ENCODE measurements at regions of chr16 and their contacts with region 1.

Region 1: GRCh38 chr16:81444448-81445121 is at the start of gene CMIP:
- DNase-seq: peak; percentile 74
- H3K4me3 ChIP-seq: peak within 1 kb of the TSS; percentile 69 to 94 (median 72)
- H3K27ac ChIP-seq: peak within 1 kb of the TSS; percentile 93
- H3K4me1 ChIP-seq: peaks cover 26% of the 10 kb centered on the region
- H3K27me3 ChIP-seq: no peaks in the 10 kb centered on the region
- CTCF ChIP-seq: no peak
- total RNA-seq, gene CMIP: 44.5 to 98.5 TPM

Region 2: DNA sequence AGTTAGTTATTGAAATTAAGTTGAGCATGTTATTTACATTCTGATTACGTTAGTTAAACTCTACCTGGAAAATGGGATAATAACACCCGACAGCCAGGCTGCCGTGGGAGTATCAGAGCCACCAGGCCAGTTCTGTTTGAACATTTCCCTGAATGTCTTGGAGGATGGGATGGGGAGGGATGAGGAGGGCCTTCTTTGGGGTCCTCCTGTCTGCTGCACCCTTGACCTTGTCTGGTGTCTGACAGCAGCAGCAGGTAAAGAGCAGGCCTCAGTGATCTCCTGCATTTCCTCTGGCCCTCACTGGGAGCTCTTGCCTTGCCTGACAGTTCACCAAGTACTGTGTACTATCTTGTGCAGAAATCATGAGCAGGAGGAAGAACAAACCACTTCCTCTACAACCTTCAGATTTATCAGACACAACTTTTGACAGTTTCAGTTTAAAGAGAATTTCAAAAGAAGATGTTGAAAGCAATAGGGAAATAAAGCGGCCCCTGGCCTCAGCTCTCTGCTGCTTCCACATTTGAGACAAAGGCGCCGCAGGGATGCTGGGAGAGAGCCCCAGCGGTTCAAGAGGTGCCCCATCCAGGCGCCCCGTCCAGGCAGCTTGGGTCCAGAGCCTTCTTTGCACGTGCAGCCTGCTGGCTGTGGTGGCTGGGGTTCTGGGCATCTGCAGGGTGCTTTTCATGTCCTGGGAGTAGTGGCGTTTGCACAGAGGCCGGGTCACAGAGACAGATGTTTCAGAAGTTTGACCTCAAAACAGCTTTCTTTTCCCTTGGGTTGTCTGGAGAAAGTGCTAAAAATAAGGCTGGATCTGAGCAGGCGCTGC is 25.3 kb after region 1 on chr16:
- CTCF ChIA-PET with region 1: no interaction called
- dilution Hi-C with region 1: no loop called
- in situ Hi-C with region 1: no loop called
- intact Hi-C with region 1: no loop called
- DNase-seq: no peak
- H3K4me3 ChIP-seq: no peak overlapping the region
- H3K27ac ChIP-seq: no peak overlapping the region
- H3K4me1 ChIP-seq: no peaks in the 10 kb centered on the region
- H3K27me3 ChIP-seq: no peaks in the 10 kb centered on the region
- CTCF ChIP-seq: no peak

Region 3: GRCh38 chr16:81493755-81494433 is 49.3 kb after region 1 on chr16:
- CTCF ChIA-PET with region 1: no interaction called
- dilution Hi-C with region 1: no loop called
- in situ Hi-C with region 1: no loop called
- intact Hi-C with region 1: loop called (anchors 2 kb)
- DNase-seq: peak; percentile 97
- H3K4me3 ChIP-seq: no peak overlapping the region
- H3K27ac ChIP-seq: peak overlapping the region; percentile 90
- H3K4me1 ChIP-seq: peaks cover 56% of the 10 kb centered on the region
- H3K27me3 ChIP-seq: no peaks in the 10 kb centered on the region
- CTCF ChIP-seq: no peak

Region 4: GRCh38 chr16:81696961-81697615 is 252.5 kb after region 1 on chr16:
- CTCF ChIA-PET with region 1: no interaction called
- dilution Hi-C with region 1: no loop called
- in situ Hi-C with region 1: no loop called
- intact Hi-C with region 1: loop called (anchors 2 kb)
- DNase-seq: peak; percentile 48
- H3K4me3 ChIP-seq: no peak overlapping the region
- H3K27ac ChIP-seq: no peak overlapping the region
- H3K4me1 ChIP-seq: peaks cover 40% of the 10 kb centered on the region
- H3K27me3 ChIP-seq: no peaks in the 10 kb centered on the region
- CTCF ChIP-seq: peak; percentile 76 to 80

Region 5: GRCh38 chr16:81715358-81716196 is 271.0 kb after region 1 on chr16:
- CTCF ChIA-PET with region 1: no interaction called
- dilution Hi-C with region 1: no loop called
- in situ Hi-C with region 1: no loop called
- intact Hi-C with region 1: loop called (anchors 5 kb)
- DNase-seq: no peak
- H3K4me3 ChIP-seq: no peak overlapping the region
- H3K27ac ChIP-seq: no peak overlapping the region
- H3K4me1 ChIP-seq: peaks cover 20% of the 10 kb centered on the region
- H3K27me3 ChIP-seq: no peaks in the 10 kb centered on the region
- CTCF ChIP-seq: no peak